ENCODE measurements at regions of chr2 and their contacts with region 1.

Region 1: GRCh38 chr2:83827618-83828017 is 631.5 kb downstream of the SUCLG1 start:
- DNase-seq: no peak
- ATAC-seq: no peak
- H3K4me3 ChIP-seq: no peak overlapping the region
- H3K27ac ChIP-seq: no peak overlapping the region
- H3K4me1 ChIP-seq: no peaks in the 10 kb centered on the region
- H3K27me3 ChIP-seq: no peaks in the 10 kb centered on the region
- CTCF ChIP-seq: peak; percentile 32 to 54 (median 43); a peak in 5 of 6 replicates
- POLR2A ChIP-seq: no peak
- RAD21 ChIP-seq: peak; percentile 56

Region 2: DNA sequence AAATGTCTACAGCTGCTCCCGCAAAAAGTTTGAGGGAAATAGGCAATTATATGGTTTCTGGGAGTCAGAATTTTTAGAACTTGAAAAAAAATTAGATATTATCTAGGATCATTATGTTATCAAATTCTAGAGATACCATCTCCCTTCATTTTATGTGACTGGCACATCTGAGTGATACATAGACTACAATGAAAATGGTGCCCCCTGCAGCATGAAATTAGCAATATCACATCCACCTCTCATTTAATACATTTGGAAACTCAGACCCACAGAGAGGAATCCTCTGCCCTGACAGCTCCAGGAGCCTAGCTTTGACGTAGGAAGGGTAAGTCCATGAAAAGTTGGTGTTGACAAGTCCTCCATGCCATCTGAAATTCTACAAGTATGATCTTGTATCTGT is 249.9 kb after region 1 on chr2:
- CTCF ChIA-PET with region 1: no interaction called
- POLR2A ChIA-PET with region 1: no interaction called
- RAD21 ChIA-PET with region 1: no interaction called
- intact Hi-C with region 1: loop called (anchors 10 kb)
- DNase-seq: peak; percentile 16
- ATAC-seq: peak; percentile 87
- H3K4me3 ChIP-seq: no peak overlapping the region
- H3K27ac ChIP-seq: no peak overlapping the region
- H3K4me1 ChIP-seq: no peaks in the 10 kb centered on the region
- H3K27me3 ChIP-seq: no peaks in the 10 kb centered on the region
- CTCF ChIP-seq: peak in 2 of 3 experiments; percentile 53 to 68; a peak in 3 of 6 replicates
- POLR2A ChIP-seq: no peak
- RAD21 ChIP-seq: peak; percentile 63

Region 3: GRCh38 chr2:84302513-84303412 is 475.1 kb after region 1 on chr2:
- CTCF ChIA-PET with region 1: interaction called, 8 read pairs
- POLR2A ChIA-PET with region 1: no interaction called
- RAD21 ChIA-PET with region 1: no interaction called
- intact Hi-C with region 1: loop called (anchors 2 kb)
- DNase-seq: peak; percentile 47
- ATAC-seq: peak; percentile 99
- H3K4me3 ChIP-seq: no peak overlapping the region
- H3K27ac ChIP-seq: no peak overlapping the region
- H3K4me1 ChIP-seq: peaks cover 0 to 2% of the 10 kb centered on the region in 2 experiments; a peak in 2 of 4 replicates
- H3K27me3 ChIP-seq: no peaks in the 10 kb centered on the region
- CTCF ChIP-seq: peak; percentile 58 to 91 (median 88); a peak in 5 of 6 replicates
- POLR2A ChIP-seq: no peak
- RAD21 ChIP-seq: peak; percentile 83

Region 4: GRCh38 chr2:84314901-84315330 is 487.3 kb after region 1 on chr2:
- CTCF ChIA-PET with region 1: interaction called, 13 read pairs
- POLR2A ChIA-PET with region 1: no interaction called
- RAD21 ChIA-PET with region 1: no interaction called
- intact Hi-C with region 1: no loop called
- DNase-seq: peak; percentile 75
- ATAC-seq: peak; percentile 99
- H3K4me3 ChIP-seq: no peak overlapping the region
- H3K27ac ChIP-seq: no peak overlapping the region
- H3K4me1 ChIP-seq: no peaks in the 10 kb centered on the region
- H3K27me3 ChIP-seq: no peaks in the 10 kb centered on the region
- CTCF ChIP-seq: peak; percentile 71 to 97 (median 97); a peak in 5 of 6 replicates
- POLR2A ChIP-seq: no peak
- RAD21 ChIP-seq: peak; percentile 96

Measured in HCT116 (cell line).